Transverse colon (tissue), 4 donors: ENCODE measurements at regions of chr6 and their contacts with region 1.

Region 1: DNA sequence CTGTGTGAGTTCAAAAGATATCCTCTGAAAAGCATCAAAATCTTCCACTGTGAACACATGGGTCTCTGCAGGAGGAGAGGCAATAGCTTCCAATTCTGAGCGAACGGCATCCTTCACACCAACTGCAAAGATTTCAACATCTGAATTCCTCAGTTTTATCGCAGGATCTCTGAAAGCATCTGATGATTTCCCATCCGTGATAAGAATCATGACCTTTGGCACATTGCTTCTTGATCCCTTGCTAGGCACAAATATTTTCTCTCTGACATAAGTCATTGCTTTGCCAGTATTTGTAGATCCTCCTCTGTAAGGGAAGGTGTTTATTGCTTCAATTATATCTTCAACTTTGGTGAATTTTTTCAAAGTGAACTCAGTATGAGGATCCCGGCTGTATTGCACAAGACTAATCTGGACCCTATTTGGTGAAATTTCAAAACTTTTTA is 22.7 kb downstream of the COL12A1 start:
- DNase-seq: no peak
- H3K4me3 ChIP-seq: no peak overlapping the region
- H3K27ac ChIP-seq: no peak overlapping the region
- H3K4me1 ChIP-seq: no peaks in the 10 kb centered on the region
- H3K27me3 ChIP-seq: no peaks in the 10 kb centered on the region
- CTCF ChIP-seq: no peak
- EP300 ChIP-seq: no peak
- POLR2A ChIP-seq: no peak

Region 2: GRCh38 chr6:74447013-74447412 is 736.1 kb before region 1 on chr6:
- in situ Hi-C with region 1: loop called in 1 of 4 experiments (anchors 25 kb)
- intact Hi-C with region 1: no loop called
- DNase-seq: no peak
- H3K4me3 ChIP-seq: no peak overlapping the region
- H3K27ac ChIP-seq: no peak overlapping the region
- H3K4me1 ChIP-seq: no peaks in the 10 kb centered on the region
- H3K27me3 ChIP-seq: no peaks in the 10 kb centered on the region
- CTCF ChIP-seq: no peak
- EP300 ChIP-seq: no peak
- POLR2A ChIP-seq: no peak

Region 3: GRCh38 chr6:74749211-74750142 is 433.6 kb before region 1 on chr6:
- in situ Hi-C with region 1: loop called in 1 of 4 experiments (anchors 25 kb)
- intact Hi-C with region 1: no loop called
- DNase-seq: no peak
- H3K4me3 ChIP-seq: no peak overlapping the region
- H3K27ac ChIP-seq: no peak overlapping the region
- H3K4me1 ChIP-seq: peaks cover 0 to 3% (median 1%) of the 10 kb centered on the region in 4 donors
- H3K27me3 ChIP-seq: no peaks in the 10 kb centered on the region
- CTCF ChIP-seq: no peak
- EP300 ChIP-seq: no peak
- POLR2A ChIP-seq: no peak